Activated T-helper 1 cell treated with anti-CD3 and anti-CD28 coated beads, Interleukin-12 subunit alpha, Interleukin-12 subunit beta, Interleukin-2, Interleukin-4 antibody, amounts not matched to agents 30 ng/mL and 10 ng/mL and 1 ng/mL, durations not matched to agents 14 hours and 24 hours and 36 hours (primary cell): ENCODE measurements at regions of chr15 and their contacts with region 1.

Region 1: DNA sequence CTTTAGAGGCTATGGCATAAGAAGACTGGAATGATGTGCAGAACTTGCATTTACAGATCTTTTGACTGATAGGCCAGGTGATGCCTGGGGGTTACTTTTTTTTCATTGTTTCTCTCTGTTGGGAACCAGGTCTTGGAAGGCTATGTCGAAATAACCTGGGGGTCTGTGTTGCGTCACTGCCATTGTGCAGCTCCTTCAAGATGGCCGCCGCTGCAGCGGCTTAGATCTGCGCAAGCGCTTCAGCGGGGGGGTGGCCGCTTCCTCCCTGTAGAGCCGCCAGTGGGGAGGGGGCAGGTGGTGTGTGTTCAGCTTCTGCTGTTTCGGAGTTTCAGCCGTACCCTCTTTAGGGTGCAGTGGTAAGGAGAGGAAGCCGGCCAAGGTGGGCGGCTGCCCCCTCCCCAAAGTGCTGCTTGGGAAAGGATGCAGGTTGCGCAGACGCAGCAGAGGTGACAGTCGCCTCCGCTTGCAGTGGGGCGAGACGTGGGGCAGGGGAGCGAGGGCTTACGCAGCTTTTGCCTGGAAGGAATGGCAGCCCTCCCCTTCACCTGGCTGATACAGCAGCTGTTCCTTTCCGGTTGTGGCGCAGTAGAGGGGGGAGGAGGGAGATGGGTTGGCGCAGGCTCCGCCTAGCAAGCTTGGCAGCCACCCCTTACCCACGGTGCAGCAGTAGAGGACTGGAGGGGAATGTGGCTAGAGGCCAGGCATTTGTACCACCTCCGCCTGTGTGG is 1.5 kb downstream of the SNRPN start:
- DNase-seq: peak; percentile 65
- H3K4me3 Mint-ChIP-seq: peak overlapping the region; percentile 95
- H3K27ac Mint-ChIP-seq: peak overlapping the region; percentile 92
- H3K4me1 Mint-ChIP-seq: peaks cover 10% of the 10 kb centered on the region
- H3K27me3 Mint-ChIP-seq: no peaks in the 10 kb centered on the region

Region 2: GRCh38 chr15:25053000-25053815 is 96.9 kb after region 1 on chr15:
- intact Hi-C with region 1: no loop called
- DNase-seq: no peak
- H3K4me3 Mint-ChIP-seq: no peak overlapping the region
- H3K27ac Mint-ChIP-seq: no peak overlapping the region
- H3K4me1 Mint-ChIP-seq: no peaks in the 10 kb centered on the region
- H3K27me3 Mint-ChIP-seq: no peaks in the 10 kb centered on the region

Region 3: DNA sequence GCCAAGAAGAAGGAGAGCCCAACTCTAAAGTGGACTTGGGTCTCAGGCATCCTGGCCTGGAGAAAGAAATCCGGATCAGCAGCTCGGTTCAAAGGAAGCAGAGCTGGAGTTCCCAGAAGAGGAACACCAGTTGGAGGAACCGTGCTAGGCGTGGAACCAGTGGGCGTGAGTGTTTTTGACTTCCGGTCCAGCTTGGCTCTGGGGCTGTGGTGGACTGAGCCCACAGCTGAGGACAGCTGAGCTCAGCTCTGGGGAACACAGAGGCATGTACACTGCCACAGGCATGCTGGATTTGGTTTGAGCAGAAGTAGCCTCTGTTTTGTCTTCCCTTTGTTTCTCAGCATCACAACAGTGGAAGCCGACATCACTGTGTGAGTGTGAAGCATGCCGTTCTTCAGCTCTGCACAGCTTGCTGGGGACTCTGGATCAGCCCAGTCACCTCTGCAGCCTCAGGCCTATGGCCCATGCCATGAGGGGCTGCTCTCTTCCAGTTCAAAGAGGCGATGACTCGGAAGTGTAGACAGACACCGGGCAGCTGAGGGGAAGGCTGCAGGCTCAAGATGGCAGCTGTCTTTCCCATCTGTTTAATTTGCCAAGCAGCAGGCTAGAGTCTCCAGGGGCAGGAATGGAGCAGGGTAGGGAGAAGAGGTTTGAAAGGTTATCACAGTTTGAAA is 668.4 kb after region 1 on chr15:
- intact Hi-C with region 1: no loop called
- DNase-seq: no peak
- H3K4me3 Mint-ChIP-seq: no peak overlapping the region
- H3K27ac Mint-ChIP-seq: no peak overlapping the region
- H3K4me1 Mint-ChIP-seq: no peaks in the 10 kb centered on the region
- H3K27me3 Mint-ChIP-seq: no peaks in the 10 kb centered on the region

Region 4: GRCh38 chr15:26082221-26083109 is 1126.2 kb after region 1 on chr15:
- intact Hi-C with region 1: loop called (anchors 10 kb)
- DNase-seq: peak; percentile 90
- H3K4me3 Mint-ChIP-seq: peak overlapping the region; percentile 92
- H3K27ac Mint-ChIP-seq: peak overlapping the region; percentile 96
- H3K4me1 Mint-ChIP-seq: peaks cover 21% of the 10 kb centered on the region
- H3K27me3 Mint-ChIP-seq: peaks cover 5% of the 10 kb centered on the region